Keratinocyte (primary cell): ENCODE measurements at regions of chr17 and their contacts with region 1.

Region 1: DNA sequence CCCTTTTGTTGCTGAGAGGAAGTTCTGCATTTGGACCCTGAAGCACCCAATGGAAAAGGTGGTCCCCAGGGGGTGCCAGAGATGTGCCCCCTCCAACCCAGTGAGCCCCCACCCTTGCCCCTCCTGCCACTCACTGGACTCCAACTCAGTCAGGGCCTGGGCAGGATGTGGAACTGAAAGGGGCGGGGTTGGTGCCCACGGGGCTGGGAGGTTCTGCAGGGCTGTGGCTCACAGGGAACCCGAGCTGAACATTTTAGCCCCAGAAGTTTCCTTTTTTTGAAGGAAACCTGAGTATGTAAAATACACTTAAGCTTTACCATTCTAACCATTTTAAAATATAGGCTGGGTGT is 15.8 kb upstream of the OGFOD3 start:
- DNase-seq: no peak
- H3K4me3 ChIP-seq: no peak overlapping the region
- H3K27ac ChIP-seq: no peak overlapping the region
- H3K4me1 ChIP-seq: no peaks in the 10 kb centered on the region
- H3K27me3 ChIP-seq: no peaks in the 10 kb centered on the region
- CTCF ChIP-seq: no peak

Region 2: GRCh38 chr17:82160075-82160474 is 274.1 kb before region 1 on chr17:
- dilution Hi-C with region 1: no loop called
- DNase-seq: peak; percentile 52
- H3K4me3 ChIP-seq: no peak overlapping the region
- H3K27ac ChIP-seq: peak overlapping the region; percentile 13
- H3K4me1 ChIP-seq: no peaks in the 10 kb centered on the region
- H3K27me3 ChIP-seq: no peaks in the 10 kb centered on the region
- CTCF ChIP-seq: no peak

Region 3: GRCh38 chr17:82349287-82349701 is 84.9 kb before region 1 on chr17:
- dilution Hi-C with region 1: loop called (anchors 10 kb)
- DNase-seq: no peak
- H3K4me3 ChIP-seq: no peak overlapping the region
- H3K27ac ChIP-seq: no peak overlapping the region
- H3K4me1 ChIP-seq: no peaks in the 10 kb centered on the region
- H3K27me3 ChIP-seq: peaks cover 15% of the 10 kb centered on the region
- CTCF ChIP-seq: no peak